ENCODE measurements at regions of chr15 and their contacts with region 1.

Region 1: DNA sequence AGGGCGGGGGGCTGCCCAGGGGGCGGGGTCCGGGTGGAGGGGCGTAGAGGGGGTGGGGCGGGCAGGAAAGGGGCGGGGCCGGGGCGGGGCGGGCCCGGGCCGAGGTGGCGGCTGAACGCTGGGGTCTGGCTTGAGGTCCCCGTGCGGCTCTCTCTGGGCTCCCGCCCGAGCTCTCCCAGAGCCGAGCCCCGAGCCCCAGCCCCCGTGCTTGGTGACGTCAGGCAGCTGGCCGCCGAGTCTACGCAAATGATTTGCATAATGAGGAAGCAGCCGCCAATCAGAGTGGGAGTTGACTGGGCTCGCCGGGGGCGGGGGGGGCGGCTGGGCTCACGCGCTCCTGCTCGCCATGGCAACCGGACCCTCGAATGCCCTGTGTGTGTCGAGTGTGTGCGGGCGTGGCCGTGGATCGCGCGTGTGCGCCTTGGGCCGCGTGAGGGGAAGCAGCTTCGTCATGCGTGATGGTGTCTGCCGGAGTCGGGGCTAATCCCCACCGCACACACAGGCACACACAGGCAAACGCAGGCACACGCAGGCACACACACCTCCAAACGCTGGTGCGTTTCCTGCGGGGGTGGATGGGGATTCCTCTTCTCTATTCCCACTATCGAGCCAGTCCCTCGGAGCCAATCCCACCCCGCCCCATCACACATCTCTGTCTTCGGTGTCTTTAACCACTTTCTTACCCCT is at the start of gene CELF6:
- DNase-seq: peak; percentile 96
- ATAC-seq: peak; percentile 75
- H3K4me3 ChIP-seq: peak within 1 kb of the TSS; percentile 8 to 69 (median 55)
- H3K4me3 Mint-ChIP-seq: peak within 1 kb of the TSS; percentile 88
- H3K27ac ChIP-seq: peak within 1 kb of the TSS in 1 of 2 donors; percentile 37
- H3K27ac Mint-ChIP-seq: peak within 1 kb of the TSS; percentile 83
- H3K4me1 ChIP-seq: peaks cover 10 to 19% of the 10 kb centered on the region in 2 donors
- H3K4me1 Mint-ChIP-seq: peaks cover 25% of the 10 kb centered on the region
- H3K27me3 ChIP-seq: no peaks in the 10 kb centered on the region
- H3K27me3 Mint-ChIP-seq: no peaks in the 10 kb centered on the region
- CTCF ChIP-seq: no peak
- total RNA-seq, gene CELF6: 4.3 and 5.3 TPM in 2 replicates

Region 2: DNA sequence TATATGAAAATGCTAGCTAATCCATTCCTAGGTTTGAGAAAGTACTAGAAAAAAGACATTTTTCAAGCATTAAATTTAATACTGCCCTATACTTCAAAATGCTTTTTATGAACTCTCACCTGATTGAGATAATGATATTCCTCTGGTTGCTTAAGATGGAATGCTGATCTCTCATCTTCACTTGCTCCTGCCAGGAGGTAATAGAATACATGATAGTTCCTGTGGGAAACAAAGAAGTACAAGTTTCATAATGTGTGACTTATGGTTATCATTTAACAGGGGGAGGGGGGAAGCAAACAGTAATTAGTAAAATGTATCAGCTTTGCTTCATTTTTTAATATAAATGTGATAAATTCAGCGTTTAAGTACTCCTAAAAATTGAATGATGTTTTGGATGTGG is 299.3 kb before region 1 on chr15:
- CTCF ChIA-PET with region 1: no interaction called
- POLR2A ChIA-PET with region 1: no interaction called
- intact Hi-C with region 1: no loop called
- DNase-seq: no peak
- ATAC-seq: no peak
- H3K4me3 ChIP-seq: no peak overlapping the region
- H3K4me3 Mint-ChIP-seq: no peak overlapping the region
- H3K27ac ChIP-seq: no peak overlapping the region
- H3K27ac Mint-ChIP-seq: no peak overlapping the region
- H3K4me1 ChIP-seq: no peaks in the 10 kb centered on the region
- H3K4me1 Mint-ChIP-seq: no peaks in the 10 kb centered on the region
- H3K27me3 ChIP-seq: no peaks in the 10 kb centered on the region
- H3K27me3 Mint-ChIP-seq: no peaks in the 10 kb centered on the region
- CTCF ChIP-seq: no peak

Region 3: DNA sequence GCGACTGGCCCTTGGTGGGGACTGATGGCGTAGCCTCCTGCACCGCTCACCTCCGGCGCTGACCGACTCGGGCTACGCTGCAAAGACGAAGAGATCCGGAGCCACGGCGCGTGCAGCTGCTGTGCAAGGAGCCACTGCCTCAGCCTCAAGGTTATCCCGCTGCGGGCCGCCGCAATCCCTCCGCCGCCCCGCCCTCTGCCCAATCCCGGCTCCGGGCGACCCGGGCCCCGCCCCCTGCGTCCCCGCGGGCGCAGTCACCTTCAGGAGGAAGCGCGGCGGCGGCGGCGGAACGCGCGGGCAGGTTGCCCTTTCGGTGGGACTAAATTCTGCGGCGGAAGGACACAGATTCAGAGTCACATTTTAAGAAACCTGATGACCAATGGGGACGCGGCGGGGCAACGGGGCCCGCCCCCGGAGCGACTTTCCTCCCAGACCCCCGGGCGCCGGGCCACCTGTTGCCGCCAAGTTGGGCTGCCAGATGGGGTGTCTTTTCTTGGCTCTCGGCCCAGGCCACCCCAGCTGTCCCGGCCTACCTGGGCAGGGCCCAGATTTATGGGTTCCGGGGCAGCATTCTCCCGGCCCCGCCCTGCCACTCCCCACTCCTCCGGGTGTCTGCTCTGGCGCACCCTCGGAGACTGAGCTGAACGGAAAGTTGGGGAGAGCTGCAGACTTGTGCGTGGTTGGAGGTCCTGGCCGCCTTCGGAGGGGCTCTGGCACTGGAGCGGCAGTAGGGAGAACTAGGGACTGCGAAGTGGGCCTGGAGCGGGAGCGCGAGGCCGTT is 88.9 kb before region 1 on chr15 and contains the start of gene PKM:
- CTCF ChIA-PET with region 1: no interaction called
- POLR2A ChIA-PET with region 1: interaction called, 8 read pairs
- intact Hi-C with region 1: loop called (anchors 5 kb)
- DNase-seq: peak; percentile 96
- ATAC-seq: peak; percentile 52
- H3K4me3 ChIP-seq: peak within 1 kb of the TSS; percentile 77 to 96 (median 93)
- H3K4me3 Mint-ChIP-seq: peak within 1 kb of the TSS; percentile 94
- H3K27ac ChIP-seq: peak within 1 kb of the TSS; percentile 91 to 94
- H3K27ac Mint-ChIP-seq: peak within 1 kb of the TSS; percentile 97
- H3K4me1 ChIP-seq: peaks cover 37 to 44% of the 10 kb centered on the region in 2 donors
- H3K4me1 Mint-ChIP-seq: peaks cover 38% of the 10 kb centered on the region
- H3K27me3 ChIP-seq: no peaks in the 10 kb centered on the region
- H3K27me3 Mint-ChIP-seq: no peaks in the 10 kb centered on the region
- CTCF ChIP-seq: no peak
- total RNA-seq, gene PKM: 306 and 323 TPM in 2 replicates

Region 4: GRCh38 chr15:72375847-72376581 is 55.9 kb after region 1 on chr15 and contains the start of gene HEXA:
- CTCF ChIA-PET with region 1: no interaction called
- POLR2A ChIA-PET with region 1: interaction called, 3 read pairs
- intact Hi-C with region 1: loop called (anchors 2 kb)
- DNase-seq: peak; percentile 98
- ATAC-seq: peak; percentile 85
- H3K4me3 ChIP-seq: peak within 1 kb of the TSS; percentile 72 to 92 (median 85)
- H3K4me3 Mint-ChIP-seq: peak within 1 kb of the TSS; percentile 98
- H3K27ac ChIP-seq: peak within 1 kb of the TSS; percentile 85 to 95
- H3K27ac Mint-ChIP-seq: peak within 1 kb of the TSS; percentile 100
- H3K4me1 ChIP-seq: peaks cover 44 to 46% of the 10 kb centered on the region in 2 donors
- H3K4me1 Mint-ChIP-seq: peaks cover 54% of the 10 kb centered on the region
- H3K27me3 ChIP-seq: no peaks in the 10 kb centered on the region
- H3K27me3 Mint-ChIP-seq: no peaks in the 10 kb centered on the region
- CTCF ChIP-seq: no peak
- total RNA-seq, gene HEXA: 151 and 154 TPM in 2 replicates

Region 5: DNA sequence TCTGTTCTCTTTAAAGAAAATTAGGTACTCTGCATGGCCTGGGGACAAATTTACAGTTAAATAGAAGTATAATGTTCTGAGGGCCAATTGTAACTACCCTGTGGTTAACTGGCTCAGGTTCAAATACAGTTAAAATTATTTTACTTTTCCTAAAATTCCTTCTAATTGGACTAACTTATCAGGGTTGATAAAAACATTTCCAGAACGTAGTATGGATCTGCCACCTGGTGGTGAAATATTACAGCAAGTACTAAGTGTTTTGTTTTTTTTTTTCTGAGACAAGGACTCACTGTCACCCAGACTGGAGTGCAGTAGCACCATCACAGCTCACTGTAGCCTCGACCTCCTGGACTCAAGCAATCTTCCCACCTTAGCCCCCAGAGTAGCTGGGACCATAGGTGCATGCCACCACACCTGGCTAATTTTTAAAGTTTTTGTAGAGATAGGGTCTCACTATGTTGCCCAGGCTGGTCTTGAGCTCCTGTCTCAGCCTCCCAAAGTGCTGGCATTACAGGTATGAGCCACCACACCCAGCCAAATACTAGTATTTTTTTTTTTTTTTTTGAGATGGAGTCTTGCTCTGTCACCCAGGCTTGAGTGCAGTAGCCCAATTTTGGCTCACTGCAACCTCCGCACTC is 761.3 kb after region 1 on chr15:
- CTCF ChIA-PET with region 1: no interaction called
- POLR2A ChIA-PET with region 1: no interaction called
- intact Hi-C with region 1: loop called (anchors 10 kb)
- DNase-seq: peak; percentile 53
- ATAC-seq: no peak
- H3K4me3 ChIP-seq: no peak overlapping the region
- H3K4me3 Mint-ChIP-seq: no peak overlapping the region
- H3K27ac ChIP-seq: no peak overlapping the region
- H3K27ac Mint-ChIP-seq: no peak overlapping the region
- H3K4me1 ChIP-seq: no peaks in the 10 kb centered on the region
- H3K4me1 Mint-ChIP-seq: no peaks in the 10 kb centered on the region
- H3K27me3 ChIP-seq: peaks cover 0 to 4% (median 0%) of the 10 kb centered on the region in 4 experiments
- H3K27me3 Mint-ChIP-seq: peaks cover 12% of the 10 kb centered on the region
- CTCF ChIP-seq: peak; percentile 69